ENCODE measurements at regions of chr11 and their contacts with region 1.

Region 1: GRCh38 chr11:31879681-31880080 is 68.6 kb upstream of the PAX6 start:
- DNase-seq: peak in 1 of 10 donors; percentile 17

Region 2: DNA sequence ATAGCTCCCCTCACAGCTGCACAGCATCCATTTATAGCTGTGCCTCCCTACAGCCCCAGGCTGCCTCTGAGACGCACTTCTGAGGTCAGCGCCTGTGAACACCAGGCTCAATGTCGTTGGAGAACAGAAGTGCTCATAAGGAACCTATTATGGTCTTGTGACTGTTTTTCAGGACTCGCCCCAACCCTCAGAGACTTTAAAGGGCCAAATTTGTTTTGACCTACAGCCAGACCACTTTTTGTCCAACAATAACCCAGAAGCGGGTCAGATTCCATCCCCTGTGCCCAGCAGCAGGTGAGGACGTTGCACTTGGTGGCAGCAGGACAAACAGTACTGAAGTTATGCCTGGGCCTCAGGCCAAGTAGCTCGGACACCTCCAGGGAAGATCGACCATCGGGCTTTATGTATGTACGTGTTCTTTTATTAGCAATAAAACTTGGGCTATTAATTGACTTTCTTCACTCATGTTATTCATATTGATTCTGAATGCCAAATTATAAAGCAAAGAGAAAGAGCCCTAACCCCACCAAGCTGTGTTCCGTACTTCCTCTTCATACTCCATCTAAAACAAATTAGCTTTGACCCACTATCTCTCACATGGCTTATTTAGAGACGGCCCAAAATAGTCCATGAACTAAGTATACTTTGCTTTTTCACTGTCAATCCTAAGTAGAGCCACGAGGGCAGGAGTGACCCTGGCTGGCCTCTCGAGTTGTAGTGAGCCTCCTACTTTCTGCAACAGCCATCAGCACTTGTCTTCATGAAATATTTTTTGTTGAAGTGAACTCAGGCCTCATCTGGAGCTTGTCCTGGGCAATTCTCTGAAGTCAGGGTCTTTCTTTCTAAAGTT is 23.8 kb after region 1 on chr11:
- intact Hi-C with region 1: no loop called
- DNase-seq: no peak

Region 3: GRCh38 chr11:31921081-31921480 is 41.4 kb after region 1 on chr11:
- intact Hi-C with region 1: loop called (anchors 1 kb)
- DNase-seq: no peak

Measured in posterior cingulate gyrus (tissue), 11 donors.